ENCODE measurements at regions of chr3 and their contacts with region 1.

Region 1: DNA sequence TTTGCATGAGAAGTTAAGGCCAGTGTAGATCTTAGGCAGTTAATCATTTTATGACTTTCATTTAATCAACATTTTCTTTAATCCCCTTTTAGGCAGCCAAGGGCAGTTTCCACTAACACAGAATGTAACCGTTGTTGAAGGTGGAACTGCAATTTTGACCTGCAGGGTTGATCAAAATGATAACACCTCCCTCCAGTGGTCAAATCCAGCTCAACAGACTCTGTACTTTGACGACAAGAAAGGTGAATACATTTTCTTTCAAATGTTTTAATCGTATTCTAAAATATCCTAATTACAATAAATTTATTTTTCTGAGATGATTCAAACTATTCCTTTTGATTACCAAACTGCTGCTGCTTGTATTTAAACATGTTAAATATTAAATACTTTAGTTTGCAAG is 843.2 kb downstream of the CADM2 start:
- DNase-seq: no peak
- CTCF ChIP-seq: no peak

Region 2: GRCh38 chr3:85567071-85567676 is 234.8 kb before region 1 on chr3:
- CTCF ChIA-PET with region 1: no interaction called
- POLR2A ChIA-PET with region 1: no interaction called
- DNase-seq: peak; percentile 20
- CTCF ChIP-seq: peak; percentile 58

Region 3: GRCh38 chr3:85821130-85821756 is 19.3 kb after region 1 on chr3:
- CTCF ChIA-PET with region 1: interaction called, 10 read pairs
- POLR2A ChIA-PET with region 1: no interaction called
- DNase-seq: peak; percentile 7
- CTCF ChIP-seq: peak; percentile 40

Measured in GM10248 (cell line).